Ovary (tissue), 10 donors: ENCODE measurements at regions of chr3 and their contacts with region 1.

Region 1: DNA sequence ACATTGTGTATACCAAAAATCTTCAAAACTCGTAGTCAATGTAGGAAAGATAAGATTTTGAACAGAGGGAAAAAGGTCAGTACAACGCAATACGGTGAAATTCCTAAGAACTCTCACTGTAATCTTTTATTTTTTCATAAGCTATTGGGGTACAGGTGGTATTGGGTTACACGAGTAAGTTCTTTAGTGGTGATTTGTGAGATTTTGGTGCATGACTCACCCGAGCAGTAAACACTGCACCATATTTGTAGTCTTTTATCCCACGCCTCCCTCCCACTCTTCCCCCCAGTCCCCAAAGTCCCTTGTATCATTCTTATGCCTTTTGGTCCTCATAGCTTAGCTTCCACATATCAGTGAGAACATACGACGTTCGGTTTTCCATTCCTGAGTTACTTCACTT is 718.0 kb downstream of the TBL1XR1 start:
- DNase-seq: no peak
- H3K4me3 ChIP-seq: no peak overlapping the region
- H3K27ac ChIP-seq: no peak overlapping the region
- H3K4me1 ChIP-seq: no peaks in the 10 kb centered on the region
- H3K27me3 ChIP-seq: no peaks in the 10 kb centered on the region
- CTCF ChIP-seq: no peak
- EP300 ChIP-seq: no peak
- POLR2A ChIP-seq: no peak

Region 2: GRCh38 chr3:176141837-176142236 is 337.5 kb before region 1 on chr3:
- intact Hi-C with region 1: loop called in 1 of 4 experiments (anchors 5 kb)
- DNase-seq: no peak
- H3K4me3 ChIP-seq: no peak overlapping the region
- H3K27ac ChIP-seq: no peak overlapping the region
- H3K4me1 ChIP-seq: no peaks in the 10 kb centered on the region
- H3K27me3 ChIP-seq: no peaks in the 10 kb centered on the region
- CTCF ChIP-seq: no peak
- EP300 ChIP-seq: no peak
- POLR2A ChIP-seq: no peak

Region 3: GRCh38 chr3:176574786-176575185 is 95.5 kb after region 1 on chr3:
- intact Hi-C with region 1: no loop called
- DNase-seq: no peak
- H3K4me3 ChIP-seq: no peak overlapping the region
- H3K27ac ChIP-seq: no peak overlapping the region
- H3K4me1 ChIP-seq: no peaks in the 10 kb centered on the region
- H3K27me3 ChIP-seq: no peaks in the 10 kb centered on the region
- CTCF ChIP-seq: no peak
- EP300 ChIP-seq: no peak
- POLR2A ChIP-seq: no peak